ENCODE measurements at regions of chr5 and their contacts with region 1.

Region 1: GRCh38 chr5:177497292-177498033 is at the start of gene PDLIM7:
- DNase-seq: peak; percentile 97
- ATAC-seq: peak; percentile 40 to 80
- H3K4me3 ChIP-seq: peak within 1 kb of the TSS; percentile 63
- H3K27ac ChIP-seq: peak within 1 kb of the TSS; percentile 82 to 95
- H3K4me1 ChIP-seq: peaks cover 51% of the 10 kb centered on the region
- CTCF ChIP-seq: no peak
- EP300 ChIP-seq: no peak
- POLR2A ChIP-seq: peak; percentile 91
- RAD21 ChIP-seq: no peak
- polyA plus RNA-seq, gene PDLIM7: 26.1 and 30.7 TPM in 2 replicates

Region 2: DNA sequence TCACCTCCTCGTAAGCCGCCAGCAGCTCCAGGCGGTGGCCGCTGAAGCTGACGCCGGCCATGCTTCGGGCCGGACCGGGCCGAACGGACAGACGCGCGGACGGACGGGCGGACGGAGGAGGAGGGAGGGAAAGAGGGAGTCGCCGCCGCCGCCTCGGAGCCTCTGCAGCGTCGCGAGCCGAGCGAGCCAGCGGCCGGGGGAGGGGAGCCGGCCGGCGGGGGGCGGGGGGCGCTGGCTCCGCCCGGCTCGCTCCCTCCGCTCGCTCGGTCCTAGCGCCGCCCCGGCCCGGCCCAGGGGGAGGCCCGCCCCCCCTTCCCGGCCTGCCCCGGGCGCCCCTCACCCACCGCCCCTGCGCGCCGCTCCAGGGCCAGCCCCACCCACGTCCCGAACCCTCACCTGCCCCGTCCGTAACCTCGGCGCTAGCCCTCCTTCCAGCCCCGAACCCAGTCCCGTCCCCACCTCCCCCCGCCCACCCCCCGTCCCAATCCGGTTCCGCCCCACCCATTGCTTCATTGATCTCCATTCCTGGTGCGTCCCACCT is 23.9 kb before region 1 on chr5 and contains the start of gene DBN1:
- CTCF ChIA-PET with region 1: interaction called, 241 read pairs
- POLR2A ChIA-PET with region 1: interaction called, 9 read pairs
- DNase-seq: peak; percentile 44 to 57
- ATAC-seq: peak; percentile 44 to 48
- H3K4me3 ChIP-seq: peak within 1 kb of the TSS; percentile 99
- H3K27ac ChIP-seq: peak within 1 kb of the TSS; percentile 97 to 99
- H3K4me1 ChIP-seq: peaks cover 57% of the 10 kb centered on the region
- CTCF ChIP-seq: no peak
- EP300 ChIP-seq: no peak
- POLR2A ChIP-seq: peak; percentile 44
- RAD21 ChIP-seq: no peak
- polyA plus RNA-seq, gene DBN1: 32.6 and 47.7 TPM in 2 replicates

Region 3: DNA sequence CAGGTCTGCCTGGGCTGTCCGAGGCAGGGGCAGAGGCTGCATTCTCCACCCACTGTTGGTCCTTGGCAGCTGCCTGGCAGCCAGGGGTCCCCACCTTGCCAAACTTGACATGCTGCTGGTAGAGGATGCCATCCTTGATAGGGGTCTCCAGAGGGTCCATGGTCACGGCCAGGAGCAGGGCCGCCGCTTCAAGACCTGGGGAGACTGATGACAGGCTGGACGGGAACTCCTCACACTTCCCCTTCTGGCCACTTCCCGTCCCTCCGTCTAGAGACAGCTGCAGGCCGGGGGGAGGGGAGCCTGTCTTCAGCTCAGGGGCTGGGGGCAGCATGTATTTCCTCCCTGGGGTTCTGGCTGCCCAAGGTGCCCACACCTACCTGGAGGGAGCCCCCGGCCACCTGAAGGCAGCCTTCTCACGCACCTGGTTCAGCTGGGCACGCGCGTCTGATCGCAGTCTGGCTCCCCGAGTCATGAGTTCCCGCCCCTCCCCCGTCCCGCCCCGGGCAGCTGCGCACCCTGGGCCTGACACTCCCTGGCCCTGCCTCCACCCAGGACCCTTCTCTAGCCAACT is 12.0 kb after region 1 on chr5 and contains the start of gene DOK3:
- CTCF ChIA-PET with region 1: interaction called, 142 read pairs
- POLR2A ChIA-PET with region 1: interaction called, 4 read pairs
- DNase-seq: no peak
- ATAC-seq: no peak
- H3K4me3 ChIP-seq: no peak within 1 kb of the TSS
- H3K27ac ChIP-seq: no peak within 1 kb of the TSS
- H3K4me1 ChIP-seq: no peaks in the 10 kb centered on the region
- CTCF ChIP-seq: no peak
- EP300 ChIP-seq: no peak
- POLR2A ChIP-seq: no peak
- RAD21 ChIP-seq: no peak
- polyA plus RNA-seq, gene DOK3: 1.3 and 1.8 TPM in 2 replicates

Region 4: DNA sequence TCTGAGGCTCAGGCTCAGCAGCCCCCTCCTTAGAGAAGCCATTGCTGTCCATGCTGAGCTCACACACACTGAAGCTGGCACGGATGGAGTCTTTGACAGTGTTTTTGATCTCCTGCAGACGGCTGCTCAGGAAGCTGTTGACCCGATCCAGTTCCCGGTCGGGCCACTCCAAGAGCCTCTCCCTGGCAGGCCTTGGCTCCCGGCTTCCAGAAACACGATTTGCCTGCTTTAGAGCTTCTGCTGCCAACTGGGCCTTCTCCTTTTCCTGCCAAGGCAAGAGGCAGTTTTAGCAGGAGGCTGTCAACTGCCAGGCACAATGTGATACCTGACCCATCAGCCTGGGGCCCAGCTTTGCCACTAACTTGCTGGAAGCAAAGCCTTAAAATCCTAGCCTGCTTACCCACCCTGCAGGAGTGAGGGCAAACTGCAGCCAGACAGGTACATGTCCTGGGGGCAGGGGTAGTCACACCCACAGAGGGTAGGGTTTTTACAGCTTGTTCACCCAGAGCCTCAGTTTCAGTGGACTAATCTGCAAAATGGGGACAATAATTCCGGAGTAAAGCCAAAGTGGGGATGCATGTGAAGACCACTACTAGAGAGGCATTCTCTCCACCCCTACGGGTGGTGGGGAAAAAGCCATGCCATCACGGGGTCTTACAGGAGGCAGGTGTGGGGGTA is 27.6 kb after region 1 on chr5:
- CTCF ChIA-PET with region 1: interaction called, 10 read pairs
- POLR2A ChIA-PET with region 1: no interaction called
- DNase-seq: no peak
- ATAC-seq: no peak
- H3K4me3 ChIP-seq: no peak overlapping the region
- H3K27ac ChIP-seq: no peak overlapping the region
- H3K4me1 ChIP-seq: no peaks in the 10 kb centered on the region
- CTCF ChIP-seq: no peak
- EP300 ChIP-seq: no peak
- POLR2A ChIP-seq: no peak
- RAD21 ChIP-seq: no peak

Region 5: GRCh38 chr5:177546258-177546741 is 48.8 kb after region 1 on chr5:
- CTCF ChIA-PET with region 1: interaction called, 10 read pairs
- POLR2A ChIA-PET with region 1: interaction called, 5 read pairs
- DNase-seq: peak; percentile 54 to 68
- ATAC-seq: peak; percentile 89 to 92
- H3K4me3 ChIP-seq: peak overlapping the region; percentile 25; the same call in 1 of the 3 replicates
- H3K27ac ChIP-seq: peak overlapping the region; percentile 53 to 79
- H3K4me1 ChIP-seq: peaks cover 30% of the 10 kb centered on the region
- CTCF ChIP-seq: peak; percentile 18; the same call in 1 of the 3 replicates
- EP300 ChIP-seq: 0 out of 5 replicates have a peak, but pooled peaks of 1 of the 2 experiments have one; percentile 24
- POLR2A ChIP-seq: no peak
- RAD21 ChIP-seq: no peak